MCF 10A (cell line): ENCODE measurements at regions of chr1 and their contacts with region 1.

Region 1: GRCh38 chr1:151846062-151846568 is 6.5 kb upstream of the C2CD4D start:
- DNase-seq: peak; percentile 68
- H3K4me3 Mint-ChIP-seq: no peak overlapping the region
- H3K27ac Mint-ChIP-seq: peak overlapping the region; percentile 39
- H3K4me1 Mint-ChIP-seq: peaks cover 17% of the 10 kb centered on the region
- H3K27me3 Mint-ChIP-seq: peaks cover 4% of the 10 kb centered on the region
- CTCF ChIP-seq: peak; percentile 19

Region 2: GRCh38 chr1:151619489-151620093 is 226.5 kb before region 1 on chr1:
- CTCF ChIA-PET with region 1: no interaction called
- POLR2A ChIA-PET with region 1: no interaction called
- intact Hi-C with region 1: no loop called
- DNase-seq: peak; percentile 58
- H3K4me3 Mint-ChIP-seq: no peak overlapping the region
- H3K27ac Mint-ChIP-seq: peak overlapping the region; percentile 17
- H3K4me1 Mint-ChIP-seq: peaks cover 37% of the 10 kb centered on the region
- H3K27me3 Mint-ChIP-seq: no peaks in the 10 kb centered on the region
- CTCF ChIP-seq: no peak

Region 3: DNA sequence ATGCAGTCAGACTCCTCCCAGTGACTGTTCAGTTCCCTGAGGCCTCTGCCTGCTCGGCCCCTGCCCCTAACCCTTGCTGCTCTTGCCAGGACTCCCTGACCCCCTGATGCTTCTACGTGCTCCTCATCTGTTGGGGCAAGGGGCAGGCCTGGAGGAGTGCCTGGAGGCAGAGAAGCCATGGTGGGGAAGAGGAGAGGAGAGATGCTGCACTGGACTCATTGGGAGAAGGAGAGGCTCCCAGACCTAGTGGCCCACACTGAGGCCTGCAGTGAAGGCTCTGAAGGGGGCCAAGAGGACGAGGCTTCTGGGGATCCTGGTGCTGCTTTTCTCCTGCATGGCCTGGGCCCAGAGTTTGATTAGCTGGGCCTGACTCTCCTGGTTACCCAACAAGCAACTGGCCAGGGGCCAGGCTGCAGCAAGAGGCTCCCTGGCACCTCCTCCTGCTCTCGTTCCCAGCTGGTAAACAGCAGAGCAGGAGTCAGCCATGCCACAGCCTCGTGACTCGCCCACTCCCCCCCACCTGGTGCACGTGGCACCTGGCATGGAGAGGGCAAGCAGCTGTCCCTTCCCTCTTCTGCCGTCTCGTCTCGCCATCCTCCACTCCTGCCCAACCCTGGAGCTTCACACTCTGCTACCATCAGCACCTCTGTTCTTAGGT is 13.7 kb before region 1 on chr1:
- CTCF ChIA-PET with region 1: interaction called, 26 read pairs
- POLR2A ChIA-PET with region 1: interaction called, 5 read pairs
- intact Hi-C with region 1: no loop called
- DNase-seq: peak; percentile 95
- H3K4me3 Mint-ChIP-seq: peak overlapping the region; percentile 56
- H3K27ac Mint-ChIP-seq: peak overlapping the region; percentile 60
- H3K4me1 Mint-ChIP-seq: peaks cover 67% of the 10 kb centered on the region
- H3K27me3 Mint-ChIP-seq: no peaks in the 10 kb centered on the region
- CTCF ChIP-seq: no peak

Region 4: DNA sequence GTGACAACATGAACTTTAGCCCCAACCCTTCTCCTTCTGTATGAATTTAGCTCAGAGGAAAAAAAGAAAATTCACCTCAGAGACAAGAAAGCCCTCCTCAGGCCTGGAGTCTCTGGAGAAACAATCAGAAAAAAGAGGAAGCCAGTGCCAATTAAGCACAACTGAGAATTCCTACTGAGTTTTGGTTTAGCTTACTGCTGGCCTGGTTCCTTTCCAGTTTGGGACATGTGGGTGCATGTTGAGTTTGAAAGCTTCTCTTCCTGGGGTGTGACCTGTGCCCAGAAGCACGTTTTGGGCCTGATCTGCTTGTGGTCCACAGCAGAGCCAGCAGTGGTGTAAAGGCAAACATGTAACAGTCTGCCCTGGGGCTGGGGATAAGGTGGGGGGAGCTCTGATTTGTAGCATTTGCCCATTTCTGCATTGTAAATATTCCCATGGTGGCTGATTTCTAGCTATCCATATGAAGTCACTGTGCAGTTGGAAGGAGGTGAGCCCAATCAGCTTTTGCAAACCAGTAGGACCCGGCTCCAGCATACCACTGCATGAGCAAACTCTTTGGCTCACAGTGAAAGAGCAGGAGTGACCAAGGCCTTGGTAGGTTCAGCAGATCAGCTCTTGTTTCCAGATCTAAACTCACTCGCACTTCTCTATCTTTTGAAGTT is 12.0 kb after region 1 on chr1:
- CTCF ChIA-PET with region 1: interaction called, 10 read pairs
- POLR2A ChIA-PET with region 1: interaction called, 12 read pairs
- intact Hi-C with region 1: no loop called
- DNase-seq: peak; percentile 66
- H3K4me3 Mint-ChIP-seq: no peak overlapping the region
- H3K27ac Mint-ChIP-seq: peak overlapping the region; percentile 84
- H3K4me1 Mint-ChIP-seq: peaks cover 40% of the 10 kb centered on the region
- H3K27me3 Mint-ChIP-seq: no peaks in the 10 kb centered on the region
- CTCF ChIP-seq: no peak